ENCODE measurements at regions of chr17 and their contacts with region 1.

Region 1: DNA sequence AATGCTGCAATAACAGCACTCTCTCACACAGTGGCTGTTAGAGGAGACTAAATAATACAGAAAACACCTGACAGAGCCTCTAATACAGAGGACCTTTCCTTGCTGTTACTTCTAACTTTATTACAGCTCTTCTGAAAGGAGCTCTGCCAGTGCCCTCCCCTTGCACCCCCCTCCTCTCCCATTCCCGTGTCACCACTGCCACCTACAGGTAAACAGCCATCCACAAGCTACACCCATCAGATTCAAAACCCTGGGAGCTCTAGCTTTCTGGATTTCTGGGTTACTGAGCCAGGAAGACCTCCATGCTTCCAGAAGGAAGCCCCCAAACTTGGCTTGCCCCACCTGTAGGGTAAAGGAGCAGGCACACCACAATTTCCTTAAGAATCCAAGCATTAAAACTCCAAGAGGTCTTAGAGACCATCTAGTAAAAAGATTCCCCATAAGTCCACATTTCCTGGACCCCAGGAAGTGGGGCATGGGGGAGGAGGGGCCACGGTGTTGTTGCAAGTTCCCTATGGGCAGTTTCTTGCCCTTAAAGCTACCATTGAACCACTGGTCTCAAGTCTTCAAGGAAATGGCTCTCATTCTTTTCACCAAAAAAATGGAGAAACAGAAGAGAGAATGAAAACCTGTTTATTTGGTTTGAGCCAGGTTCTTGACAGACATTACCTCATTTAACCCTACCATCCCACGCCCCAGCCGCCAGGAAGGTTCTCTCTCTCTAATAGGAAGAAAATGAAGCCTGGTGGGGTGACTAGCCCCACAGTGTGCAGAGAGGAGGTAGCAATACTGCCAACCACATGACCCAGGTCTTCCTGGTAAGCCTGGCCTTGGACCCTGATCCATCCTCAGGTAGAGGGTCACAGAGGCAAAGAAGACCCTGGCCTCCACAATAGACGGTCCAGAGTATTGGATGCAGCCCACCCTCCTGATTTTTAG is 52.8 kb downstream of the TOM1L2 start:
- DNase-seq: peak; percentile 78
- H3K4me3 ChIP-seq: no peak overlapping the region
- H3K27ac ChIP-seq: peak overlapping the region; percentile 12
- H3K4me1 ChIP-seq: peaks cover 28% of the 10 kb centered on the region
- H3K27me3 ChIP-seq: no peaks in the 10 kb centered on the region
- CTCF ChIP-seq: peak; percentile 78 to 81
- POLR2A ChIP-seq: no peak

Region 2: GRCh38 chr17:17729620-17730249 is 189.7 kb before region 1 on chr17:
- CTCF ChIA-PET with region 1: interaction called, 5 read pairs
- POLR2A ChIA-PET with region 1: no interaction called
- dilution Hi-C with region 1: no loop called
- intact Hi-C with region 1: loop called (anchors 5 kb)
- DNase-seq: no peak
- H3K4me3 ChIP-seq: no peak overlapping the region
- H3K27ac ChIP-seq: no peak overlapping the region
- H3K4me1 ChIP-seq: peaks cover 24% of the 10 kb centered on the region
- H3K27me3 ChIP-seq: no peaks in the 10 kb centered on the region
- CTCF ChIP-seq: peak; percentile 28 to 49
- POLR2A ChIP-seq: no peak

Region 3: DNA sequence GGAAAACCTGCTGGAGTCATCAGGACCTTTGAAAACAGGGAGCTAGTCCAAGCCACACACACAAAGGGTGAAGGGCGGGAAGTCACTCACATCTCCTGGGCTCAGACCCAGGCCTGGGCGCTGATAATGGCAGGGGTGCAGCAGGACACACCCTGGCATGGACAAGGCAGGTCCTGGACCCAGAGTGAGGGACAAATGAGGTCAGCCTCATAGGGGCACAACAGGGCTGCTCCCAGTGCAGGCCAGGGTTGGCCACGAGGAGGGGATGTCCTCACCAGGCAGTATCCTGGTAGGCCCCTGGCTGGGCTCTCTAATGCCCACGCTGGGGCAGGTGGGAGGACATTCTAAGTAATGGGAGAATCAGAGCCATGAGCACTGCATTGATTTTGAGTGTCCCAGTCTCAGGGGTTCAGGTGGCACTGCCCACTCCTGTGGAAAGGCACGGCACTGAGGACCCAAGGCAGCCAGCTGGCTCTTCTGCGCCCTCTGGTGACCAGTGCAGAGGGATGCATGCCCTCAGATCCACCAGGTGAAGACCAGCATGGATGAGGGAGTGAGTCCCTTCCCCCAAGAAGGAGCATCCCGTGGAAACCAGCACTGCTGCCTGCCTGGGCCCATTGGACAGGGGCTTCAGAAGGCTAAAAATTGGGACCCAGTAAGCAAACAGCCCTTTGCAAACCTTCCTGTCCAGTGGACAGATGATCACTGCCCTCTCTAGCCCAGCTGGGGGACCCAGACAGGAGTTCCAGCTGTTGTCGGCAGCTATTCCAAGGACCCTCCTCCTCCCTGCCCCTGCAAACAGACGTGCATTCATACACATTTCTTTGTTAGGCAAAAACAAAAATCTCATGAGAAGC is 59.3 kb before region 1 on chr17:
- CTCF ChIA-PET with region 1: interaction called, 15 read pairs
- POLR2A ChIA-PET with region 1: no interaction called
- dilution Hi-C with region 1: no loop called
- intact Hi-C with region 1: loop called (anchors 1 kb)
- DNase-seq: peak; percentile 59
- H3K4me3 ChIP-seq: no peak overlapping the region
- H3K27ac ChIP-seq: no peak overlapping the region
- H3K4me1 ChIP-seq: no peaks in the 10 kb centered on the region
- H3K27me3 ChIP-seq: no peaks in the 10 kb centered on the region
- CTCF ChIP-seq: peak; percentile 88 to 97
- POLR2A ChIP-seq: no peak

Region 4: GRCh38 chr17:17890773-17891759 is 28.4 kb before region 1 on chr17:
- CTCF ChIA-PET with region 1: interaction called, 175 read pairs
- POLR2A ChIA-PET with region 1: interaction called, 3 read pairs
- dilution Hi-C with region 1: no loop called
- intact Hi-C with region 1: loop called (anchors 1 kb)
- DNase-seq: peak; percentile 66
- H3K4me3 ChIP-seq: no peak overlapping the region
- H3K27ac ChIP-seq: no peak overlapping the region
- H3K4me1 ChIP-seq: no peaks in the 10 kb centered on the region
- H3K27me3 ChIP-seq: no peaks in the 10 kb centered on the region
- CTCF ChIP-seq: peak; percentile 83 to 91
- POLR2A ChIP-seq: no peak

Region 5: DNA sequence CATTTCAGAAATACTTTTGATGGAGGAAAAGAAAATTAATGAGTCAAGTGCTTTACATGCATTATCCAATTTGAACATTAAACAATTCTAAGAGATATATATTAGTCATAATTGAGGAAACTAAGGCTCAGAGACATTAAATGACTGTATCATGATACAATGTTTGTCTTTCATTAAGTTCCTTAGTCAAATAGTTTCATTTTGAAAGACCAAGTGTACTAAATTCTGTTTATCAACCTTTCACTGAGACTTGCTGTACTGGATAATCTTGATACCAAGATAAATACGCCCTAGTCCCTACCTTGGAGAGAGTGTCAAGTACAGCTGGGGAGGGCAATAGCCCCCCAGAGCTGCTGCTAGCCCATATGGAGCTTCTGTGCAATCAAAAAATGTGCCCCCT is 28.5 kb after region 1 on chr17:
- CTCF ChIA-PET with region 1: interaction called, 11 read pairs
- POLR2A ChIA-PET with region 1: no interaction called
- dilution Hi-C with region 1: no loop called
- intact Hi-C with region 1: no loop called
- DNase-seq: no peak
- H3K4me3 ChIP-seq: no peak overlapping the region
- H3K27ac ChIP-seq: no peak overlapping the region
- H3K4me1 ChIP-seq: peaks cover 15% of the 10 kb centered on the region
- H3K27me3 ChIP-seq: no peaks in the 10 kb centered on the region
- CTCF ChIP-seq: no peak
- POLR2A ChIP-seq: no peak

Region 6: DNA sequence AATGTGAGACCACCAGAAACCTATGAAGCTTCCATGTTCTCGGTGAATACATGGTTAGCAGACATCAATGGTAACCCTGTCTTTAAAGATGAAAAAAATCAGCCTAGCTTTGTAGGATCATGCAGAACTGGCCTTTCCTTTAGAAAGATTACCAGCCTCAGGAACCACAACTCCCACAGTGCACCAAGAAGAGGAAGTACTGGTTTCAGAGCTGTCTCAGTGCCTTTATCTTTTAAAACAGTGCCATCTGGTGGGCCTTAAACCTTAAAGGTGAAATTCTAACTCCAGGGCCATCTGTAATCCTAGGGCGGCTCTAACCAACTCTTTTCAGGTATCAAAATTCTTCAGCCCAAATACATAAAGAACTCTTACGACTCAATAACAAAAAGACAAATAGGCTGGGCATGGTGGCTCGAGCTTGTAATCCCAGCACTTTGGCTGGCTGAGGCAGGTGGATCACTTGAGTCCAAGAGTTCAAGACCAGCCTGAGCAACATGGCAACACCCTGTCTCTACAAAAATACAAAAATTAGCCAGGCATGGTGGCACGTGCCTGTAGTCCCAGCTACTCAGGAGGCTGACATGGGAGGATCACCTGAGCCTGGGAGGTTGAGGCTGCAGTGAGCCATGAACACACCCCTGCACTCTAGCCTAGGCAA is 114.1 kb after region 1 on chr17:
- CTCF ChIA-PET with region 1: interaction called, 23 read pairs
- POLR2A ChIA-PET with region 1: no interaction called
- dilution Hi-C with region 1: no loop called
- intact Hi-C with region 1: no loop called
- DNase-seq: peak; percentile 78
- H3K4me3 ChIP-seq: no peak overlapping the region
- H3K27ac ChIP-seq: no peak overlapping the region
- H3K4me1 ChIP-seq: peaks cover 21% of the 10 kb centered on the region
- H3K27me3 ChIP-seq: no peaks in the 10 kb centered on the region
- CTCF ChIP-seq: peak; percentile 46 to 55
- POLR2A ChIP-seq: no peak